ENCODE measurements at regions of chrX and their contacts with region 1.

Region 1: DNA sequence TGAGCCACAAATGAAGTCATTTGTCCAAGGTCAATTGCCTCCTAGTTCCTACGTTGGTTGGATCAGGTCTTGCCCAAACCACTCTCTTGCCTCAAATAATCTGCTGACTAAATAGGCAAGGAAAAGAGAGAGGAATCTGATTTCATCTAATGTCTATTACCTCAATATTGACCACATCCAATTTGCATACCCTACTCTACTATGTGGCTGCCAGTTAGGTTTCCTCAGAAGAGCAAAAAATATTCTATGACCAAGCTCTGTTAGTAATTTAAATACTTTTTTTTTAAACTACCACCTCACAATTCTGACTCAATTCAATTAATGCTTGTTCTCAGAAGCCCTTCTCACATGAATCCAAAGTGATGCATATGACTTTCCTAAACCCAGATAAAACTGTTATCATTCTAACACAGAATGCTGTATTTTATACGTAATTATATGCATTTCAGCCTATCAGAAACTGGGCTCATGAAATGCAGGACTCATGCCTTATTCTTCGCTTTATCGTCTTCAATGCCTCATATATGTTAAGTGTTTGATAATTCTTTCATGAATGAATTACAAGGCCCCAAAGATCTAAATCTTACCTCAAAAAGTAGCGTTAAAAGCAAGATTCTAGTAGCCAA is 98.6 kb downstream of the HUWE1 start:
- DNase-seq: no peak
- ATAC-seq: no peak

Region 2: DNA sequence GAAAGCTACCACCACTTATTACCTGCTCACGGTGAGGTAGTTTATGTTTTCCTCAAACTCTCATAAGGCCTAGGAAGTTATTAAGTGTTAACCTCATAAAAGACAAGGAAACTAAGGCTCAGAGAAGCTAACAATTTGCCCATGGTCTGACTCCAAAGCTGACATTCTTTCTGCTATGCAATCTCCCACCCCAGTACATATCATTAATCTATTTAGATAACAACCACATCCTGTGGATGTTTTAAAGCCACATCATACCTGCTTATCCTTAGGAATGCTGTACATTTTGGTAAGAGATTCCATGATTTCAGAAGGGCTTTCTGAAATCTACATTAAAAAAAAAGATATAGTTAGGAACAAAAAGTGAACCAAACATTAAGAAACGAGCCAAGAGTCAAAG is 43.2 kb after region 1 on chrX:
- intact Hi-C with region 1: loop called (anchors 5 kb)
- DNase-seq: no peak
- ATAC-seq: no peak